ENCODE measurements at regions of chr3 and their contacts with region 1.

Region 1: GRCh38 chr3:51176923-51177322 is 208.2 kb upstream of the MANF start:
- DNase-seq: no peak
- ATAC-seq: no peak
- H3K4me3 ChIP-seq: no peak overlapping the region
- H3K4me1 ChIP-seq: no peaks in the 10 kb centered on the region
- CTCF ChIP-seq: no peak

Region 2: DNA sequence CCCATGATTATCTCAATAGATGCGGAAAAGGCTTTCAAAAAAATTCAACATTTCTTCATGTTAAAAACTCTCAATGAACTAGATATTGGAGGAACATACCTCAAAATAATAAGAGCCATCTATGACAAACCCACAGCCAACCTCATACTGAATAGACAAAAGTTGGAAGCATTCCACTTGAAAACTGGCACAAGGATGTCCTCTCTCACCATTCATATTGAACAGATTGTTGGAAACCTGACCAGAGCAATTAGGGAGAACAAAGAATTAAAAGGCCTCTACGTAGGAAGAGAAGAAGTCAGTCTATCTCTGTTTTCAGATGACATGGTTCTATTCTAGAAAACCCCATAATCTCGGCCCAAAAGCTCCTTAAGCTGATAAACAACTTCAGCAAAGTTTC is 66.3 kb before region 1 on chr3:
- intact Hi-C with region 1: loop called in 1 of 2 experiments (anchors 10 kb)
- DNase-seq: no peak
- ATAC-seq: no peak
- H3K4me3 ChIP-seq: no peak overlapping the region
- H3K4me1 ChIP-seq: no peaks in the 10 kb centered on the region
- CTCF ChIP-seq: no peak

Region 3: GRCh38 chr3:51311055-51311454 is 134.1 kb after region 1 on chr3:
- intact Hi-C with region 1: no loop called
- DNase-seq: peak in 1 of 3 donors; percentile 1
- ATAC-seq: no peak
- H3K4me3 ChIP-seq: no peak overlapping the region
- H3K4me1 ChIP-seq: no peaks in the 10 kb centered on the region
- CTCF ChIP-seq: no peak

Measured in mucosa of descending colon (tissue), 3 donors.